ENCODE measurements at regions of chr5 and their contacts with region 1.

Region 1: DNA sequence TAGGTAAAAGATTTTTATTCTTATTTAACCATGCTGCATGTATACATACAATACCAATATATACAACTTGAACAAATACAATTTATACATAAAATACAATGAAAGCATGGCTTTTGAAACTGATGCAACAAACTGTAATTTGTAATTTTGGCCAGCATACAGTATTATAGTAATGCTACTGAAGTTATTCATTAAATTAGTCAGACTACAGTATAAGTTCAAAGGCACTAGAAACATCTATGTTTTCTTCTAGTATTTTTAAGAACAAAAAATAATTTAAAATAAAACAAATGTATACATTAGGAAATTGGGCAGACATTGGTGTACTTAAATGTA is 18.8 kb downstream of the IL4 start:
- DNase-seq: no peak
- H3K4me3 ChIP-seq: no peak overlapping the region
- CTCF ChIP-seq: no peak
- POLR2A ChIP-seq: no peak

Region 2: DNA sequence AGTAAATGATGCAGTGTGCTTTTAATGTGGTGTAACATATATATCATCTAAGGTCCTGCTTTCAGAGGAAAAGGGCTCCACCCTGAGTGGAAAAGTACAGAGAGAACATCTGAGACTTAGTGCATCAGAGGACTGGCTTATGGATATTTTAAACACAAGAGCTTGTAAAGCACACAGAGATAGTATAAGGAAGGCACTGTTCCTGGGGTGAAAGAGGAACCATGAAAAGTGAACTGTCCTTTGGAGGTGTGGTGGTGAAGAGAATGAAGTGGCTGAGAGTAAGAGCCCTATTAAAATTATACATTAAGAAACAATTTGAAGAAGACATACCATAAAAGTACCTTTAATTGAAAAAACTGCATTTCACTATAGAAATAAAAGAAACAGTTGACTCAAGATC is 550.1 kb before region 1 on chr5:
- intact Hi-C with region 1: no loop called
- DNase-seq: no peak
- H3K4me3 ChIP-seq: no peak overlapping the region
- CTCF ChIP-seq: no peak
- POLR2A ChIP-seq: no peak

Region 3: DNA sequence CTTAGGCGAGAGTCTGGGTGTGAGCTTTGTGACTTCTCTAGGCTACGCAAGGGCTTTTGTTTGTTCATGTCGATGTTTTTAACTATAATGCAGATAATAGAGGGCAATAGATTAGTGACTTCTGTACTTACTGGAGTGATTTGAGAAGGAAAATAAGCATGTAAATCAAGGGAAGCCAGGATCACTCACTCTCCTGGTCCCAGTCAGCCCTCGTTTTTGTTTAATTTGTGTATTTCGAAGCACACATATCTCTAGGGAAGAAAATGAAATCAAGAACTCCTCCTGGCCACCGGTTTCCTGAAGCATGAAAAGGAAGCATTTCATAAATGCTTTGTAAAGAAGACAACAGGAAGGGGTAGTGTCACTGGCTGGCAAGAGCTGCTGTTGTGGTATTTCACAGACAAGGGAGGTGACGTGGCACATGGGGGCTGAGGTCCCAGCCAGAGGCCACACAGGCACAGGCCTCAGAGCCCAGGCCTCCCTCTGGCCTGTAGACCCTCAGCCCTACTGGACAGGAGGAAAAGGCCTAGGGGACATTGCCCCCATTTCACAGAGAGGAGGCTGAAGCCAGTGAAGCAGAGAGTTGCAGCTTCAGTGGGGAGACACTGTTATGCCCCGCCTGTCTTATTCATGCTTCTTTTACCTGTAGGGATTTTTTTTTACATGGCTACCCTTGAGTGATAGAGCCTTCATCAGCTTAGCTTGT is 236.2 kb before region 1 on chr5:
- intact Hi-C with region 1: no loop called
- DNase-seq: peak; percentile 71 to 92
- H3K4me3 ChIP-seq: no peak overlapping the region
- CTCF ChIP-seq: no peak
- POLR2A ChIP-seq: no peak

Region 4: DNA sequence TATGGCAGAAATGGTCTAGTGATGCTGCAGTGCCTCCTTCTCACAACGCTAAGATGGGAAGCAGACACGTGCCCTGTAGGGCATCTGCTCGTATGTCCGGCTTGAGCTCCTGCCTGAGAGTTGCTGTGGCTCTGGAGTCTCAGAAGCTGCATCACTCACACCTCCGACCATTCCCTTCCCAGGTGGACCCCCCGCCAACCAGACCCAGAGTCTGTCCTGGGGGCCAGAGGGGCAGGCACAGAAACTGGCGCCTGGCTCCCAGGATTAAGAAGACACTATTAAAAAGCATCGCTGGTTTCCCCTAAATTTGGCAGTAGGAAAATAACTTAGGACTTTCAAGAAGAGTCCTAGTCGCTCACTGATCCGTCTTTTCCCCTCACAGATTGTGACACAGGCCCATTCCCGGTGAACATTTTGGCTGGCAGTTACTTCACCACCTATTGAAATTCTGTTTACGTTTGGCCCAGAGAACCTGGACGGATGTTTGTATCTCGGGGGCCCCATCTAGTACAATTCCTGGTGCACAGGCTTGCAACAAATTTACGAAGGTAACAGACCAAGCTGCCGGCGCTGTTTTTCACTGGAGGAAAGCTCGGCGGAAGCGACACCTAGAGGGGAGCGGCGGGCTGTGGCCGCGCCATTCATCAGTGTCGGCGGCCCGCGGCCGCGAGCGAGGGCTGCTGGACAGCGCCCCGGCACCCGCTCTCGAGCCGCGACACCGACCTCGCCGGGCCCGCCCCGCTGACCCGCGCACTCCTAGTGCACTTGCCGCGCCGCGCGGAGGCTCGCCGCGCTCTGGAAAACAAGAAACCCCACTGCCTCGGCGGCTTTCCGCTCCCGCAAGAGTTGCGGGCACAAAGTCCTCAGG is 918.1 kb after region 1 on chr5:
- intact Hi-C with region 1: loop called (anchors 10 kb)
- DNase-seq: no peak
- H3K4me3 ChIP-seq: no peak overlapping the region
- CTCF ChIP-seq: no peak
- POLR2A ChIP-seq: no peak

Measured in lower leg skin (tissue), 4 donors.